Colonic mucosa (tissue), 4 donors: ENCODE measurements at regions of chr1 and their contacts with region 1.

Region 1: GRCh38 chr1:24688621-24689195 is 45.6 kb downstream of the SRRM1 start:
- DNase-seq: peak; percentile 73
- H3K4me3 ChIP-seq: no peak overlapping the region
- H3K27ac ChIP-seq: no peak overlapping the region
- H3K4me1 ChIP-seq: no peaks in the 10 kb centered on the region
- H3K27me3 ChIP-seq: no peaks in the 10 kb centered on the region
- CTCF ChIP-seq: peak; percentile 62

Region 2: GRCh38 chr1:24830680-24831272 is 142.1 kb after region 1 on chr1:
- intact Hi-C with region 1: loop called (anchors 2 kb)
- DNase-seq: no peak
- H3K4me3 ChIP-seq: no peak overlapping the region
- H3K27ac ChIP-seq: no peak overlapping the region
- H3K4me1 ChIP-seq: no peaks in the 10 kb centered on the region
- H3K27me3 ChIP-seq: no peaks in the 10 kb centered on the region
- CTCF ChIP-seq: peak; percentile 71

Region 3: DNA sequence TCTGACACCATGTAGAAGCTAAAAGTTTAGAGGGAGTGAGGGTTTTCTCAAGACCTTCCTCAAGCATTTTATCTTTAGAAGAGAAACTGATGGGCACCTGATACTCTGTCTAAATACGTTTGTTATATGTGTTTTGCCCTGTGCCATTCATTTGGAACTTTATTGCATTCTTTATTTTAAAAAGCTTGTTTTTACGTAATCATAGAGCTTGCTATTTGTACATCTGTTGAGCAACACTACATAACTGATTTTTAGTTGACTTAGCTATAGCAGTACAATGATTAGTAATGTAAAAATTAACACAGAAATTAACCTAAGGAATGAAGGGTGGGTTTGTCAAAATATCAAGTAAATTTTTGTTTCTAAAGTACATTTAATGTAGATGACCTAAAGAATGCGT is 152.9 kb after region 1 on chr1:
- intact Hi-C with region 1: loop called (anchors 2 kb)
- DNase-seq: no peak
- H3K4me3 ChIP-seq: no peak overlapping the region
- H3K27ac ChIP-seq: no peak overlapping the region
- H3K4me1 ChIP-seq: no peaks in the 10 kb centered on the region
- H3K27me3 ChIP-seq: no peaks in the 10 kb centered on the region
- CTCF ChIP-seq: no peak